Ovary (tissue), 10 donors: ENCODE measurements at regions of chr2 and their contacts with region 1.

Region 1: DNA sequence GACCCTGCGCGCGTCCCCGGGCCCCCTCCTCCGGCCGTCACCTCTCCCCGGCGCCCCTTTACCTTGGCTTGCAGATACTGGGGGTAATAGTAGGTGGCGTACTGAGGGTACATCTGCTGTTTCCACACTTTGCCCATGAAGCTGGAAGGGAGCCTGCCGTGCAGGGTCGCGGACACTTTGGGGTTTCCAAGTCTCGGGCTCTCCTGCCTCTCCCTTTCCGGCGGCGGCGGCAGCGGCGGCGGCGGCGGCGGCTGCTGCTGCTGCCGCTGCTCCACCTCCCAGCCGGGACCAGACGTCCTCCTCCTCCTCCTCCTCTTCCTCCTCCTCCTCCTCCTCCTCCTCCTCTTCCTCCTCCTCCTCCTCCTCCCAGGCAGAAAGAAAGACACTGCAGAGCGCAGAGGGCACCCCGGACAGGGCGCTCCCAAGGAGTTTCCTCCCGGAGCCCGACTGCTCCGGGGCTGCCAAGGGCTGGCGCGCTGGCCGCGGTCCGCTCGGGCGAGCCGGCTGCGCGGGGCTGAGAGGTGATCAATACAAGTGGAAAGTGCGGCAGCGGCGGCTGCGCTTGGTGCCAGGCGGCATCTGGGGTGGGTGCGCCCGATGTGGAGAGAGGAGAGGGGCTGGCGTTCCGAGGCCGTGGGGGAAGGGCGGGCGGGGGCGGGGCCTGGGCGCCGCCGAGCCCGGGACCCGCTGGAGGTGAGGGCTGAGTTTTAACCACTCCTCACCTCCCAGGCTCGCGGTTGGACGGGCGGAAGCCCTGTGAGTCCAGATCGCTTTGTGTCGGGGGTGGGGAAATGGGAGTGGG is at the start of gene RBMS1:
- DNase-seq: peak; percentile 70 to 76 (median 75)
- H3K4me3 ChIP-seq: peak within 1 kb of the TSS; percentile 94
- H3K27ac ChIP-seq: peak within 1 kb of the TSS; percentile 40 to 98
- H3K4me1 ChIP-seq: peaks cover 5% of the 10 kb centered on the region
- H3K27me3 ChIP-seq: no peaks in the 10 kb centered on the region
- CTCF ChIP-seq: no peak
- EP300 ChIP-seq: no peak
- POLR2A ChIP-seq: no peak
- total RNA-seq, gene RBMS1: 67.5 to 91.9 (median 73.8) TPM

Region 2: DNA sequence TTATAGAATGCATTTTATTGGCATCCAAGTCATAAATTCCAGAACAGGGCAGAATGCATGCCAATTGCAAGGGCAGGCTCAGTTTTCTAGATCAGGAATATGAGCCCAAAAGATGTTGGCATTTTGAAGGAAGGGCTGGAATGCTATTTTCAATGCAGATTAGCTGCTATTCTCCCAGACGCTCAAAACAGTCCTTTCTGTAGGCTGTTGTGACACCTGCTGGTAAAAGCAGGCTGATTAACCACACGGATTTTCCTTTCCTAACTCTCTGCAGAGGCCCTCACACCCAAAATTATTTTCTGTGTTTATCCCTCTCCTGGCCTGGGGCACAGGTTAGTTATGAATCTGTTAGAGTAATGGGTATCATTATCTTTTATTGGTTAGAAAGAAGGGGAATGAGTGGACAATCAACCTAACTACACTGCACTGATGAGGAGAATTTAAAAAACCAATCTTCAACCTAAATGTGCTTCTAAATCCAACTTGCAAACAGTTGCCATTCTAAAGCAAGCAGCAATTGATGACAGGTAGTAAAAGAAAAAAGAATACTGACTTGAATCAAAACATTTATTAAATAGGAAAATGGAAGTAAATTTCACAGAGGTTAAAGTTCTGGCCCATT is 525.0 kb before region 1 on chr2:
- intact Hi-C with region 1: no loop called
- DNase-seq: peak in 2 of 5 donors; percentile 17 to 30
- H3K4me3 ChIP-seq: no peak overlapping the region
- H3K27ac ChIP-seq: no peak overlapping the region
- H3K4me1 ChIP-seq: no peaks in the 10 kb centered on the region
- H3K27me3 ChIP-seq: no peaks in the 10 kb centered on the region
- CTCF ChIP-seq: peak in 2 of 3 donors; percentile 31 to 50
- EP300 ChIP-seq: no peak
- POLR2A ChIP-seq: no peak

Region 3: GRCh38 chr2:160666154-160667060 is 173.0 kb after region 1 on chr2:
- intact Hi-C with region 1: loop called in 1 of 4 experiments (anchors 5 kb)
- DNase-seq: peak in 2 of 5 donors; percentile 19 to 29
- H3K4me3 ChIP-seq: peak overlapping the region; percentile 23
- H3K27ac ChIP-seq: peak overlapping the region in 1 of 2 donors; percentile 71
- H3K4me1 ChIP-seq: peaks cover 3% of the 10 kb centered on the region
- H3K27me3 ChIP-seq: no peaks in the 10 kb centered on the region
- CTCF ChIP-seq: no peak
- EP300 ChIP-seq: no peak
- POLR2A ChIP-seq: no peak